ENCODE measurements at regions of chr5 and their contacts with region 1.

Region 1: GRCh38 chr5:108345541-108346171 is 36.2 kb downstream of the FBXL17 start:
- DNase-seq: no peak
- ATAC-seq: no peak
- H3K4me3 Mint-ChIP-seq: no peak overlapping the region
- H3K27ac Mint-ChIP-seq: no peak overlapping the region
- H3K4me1 Mint-ChIP-seq: no peaks in the 10 kb centered on the region
- H3K27me3 Mint-ChIP-seq: no peaks in the 10 kb centered on the region
- CTCF ChIP-seq: no peak

Region 2: GRCh38 chr5:107571621-107572536 is 773.8 kb before region 1 on chr5:
- CTCF ChIA-PET with region 1: no interaction called
- POLR2A ChIA-PET with region 1: no interaction called
- intact Hi-C with region 1: loop called (anchors 10 kb)
- DNase-seq: peak; percentile 70
- ATAC-seq: peak; percentile 91
- H3K4me3 Mint-ChIP-seq: peak overlapping the region; percentile 77
- H3K27ac Mint-ChIP-seq: no peak overlapping the region
- H3K4me1 Mint-ChIP-seq: peaks cover 19% of the 10 kb centered on the region
- H3K27me3 Mint-ChIP-seq: peaks cover 5% of the 10 kb centered on the region
- CTCF ChIP-seq: peak; percentile 94

Region 3: GRCh38 chr5:107673368-107674136 is 672.1 kb before region 1 on chr5:
- CTCF ChIA-PET with region 1: no interaction called
- POLR2A ChIA-PET with region 1: no interaction called
- intact Hi-C with region 1: loop called (anchors 10 kb)
- DNase-seq: no peak
- ATAC-seq: peak; percentile 74
- H3K4me3 Mint-ChIP-seq: peak overlapping the region; percentile 80
- H3K27ac Mint-ChIP-seq: no peak overlapping the region
- H3K4me1 Mint-ChIP-seq: peaks cover 34% of the 10 kb centered on the region
- H3K27me3 Mint-ChIP-seq: peaks cover 49% of the 10 kb centered on the region
- CTCF ChIP-seq: no peak

Region 4: GRCh38 chr5:108148715-108149139 is 196.9 kb before region 1 on chr5:
- CTCF ChIA-PET with region 1: interaction called, 3 read pairs
- POLR2A ChIA-PET with region 1: no interaction called
- intact Hi-C with region 1: loop called (anchors 2 kb)
- DNase-seq: no peak
- ATAC-seq: no peak
- H3K4me3 Mint-ChIP-seq: no peak overlapping the region
- H3K27ac Mint-ChIP-seq: no peak overlapping the region
- H3K4me1 Mint-ChIP-seq: no peaks in the 10 kb centered on the region
- H3K27me3 Mint-ChIP-seq: no peaks in the 10 kb centered on the region
- CTCF ChIP-seq: no peak

Region 5: DNA sequence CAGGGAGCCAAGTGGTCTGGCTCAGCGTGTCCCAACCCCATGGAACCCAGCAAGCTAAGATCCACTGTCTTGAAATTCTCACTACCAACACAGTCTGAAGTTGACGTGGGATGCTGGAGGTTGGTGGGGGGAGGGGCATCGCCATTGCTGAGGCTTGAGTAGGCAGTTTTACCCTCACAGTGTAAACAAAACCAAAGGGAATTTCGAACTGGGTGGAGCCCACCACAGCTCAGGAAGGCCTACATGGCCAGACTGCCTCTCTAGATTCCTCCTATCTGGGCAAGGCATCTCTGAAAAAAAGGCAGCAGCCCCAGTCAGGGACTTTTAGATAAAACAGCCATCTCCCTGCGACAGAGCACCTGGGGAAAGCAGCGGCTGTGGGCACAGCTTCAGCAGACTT is 53.3 kb after region 1 on chr5:
- CTCF ChIA-PET with region 1: no interaction called
- POLR2A ChIA-PET with region 1: no interaction called
- intact Hi-C with region 1: no loop called
- DNase-seq: no peak
- ATAC-seq: no peak
- H3K4me3 Mint-ChIP-seq: no peak overlapping the region
- H3K27ac Mint-ChIP-seq: no peak overlapping the region
- H3K4me1 Mint-ChIP-seq: no peaks in the 10 kb centered on the region
- H3K27me3 Mint-ChIP-seq: peaks cover 30% of the 10 kb centered on the region
- CTCF ChIP-seq: no peak